GM10248 (cell line): ENCODE measurements at regions of chr3 and their contacts with region 1.

Region 1: GRCh38 chr3:130929804-130930203 is 35.9 kb downstream of the ATP2C1 start:
- DNase-seq: no peak
- CTCF ChIP-seq: no peak

Region 2: DNA sequence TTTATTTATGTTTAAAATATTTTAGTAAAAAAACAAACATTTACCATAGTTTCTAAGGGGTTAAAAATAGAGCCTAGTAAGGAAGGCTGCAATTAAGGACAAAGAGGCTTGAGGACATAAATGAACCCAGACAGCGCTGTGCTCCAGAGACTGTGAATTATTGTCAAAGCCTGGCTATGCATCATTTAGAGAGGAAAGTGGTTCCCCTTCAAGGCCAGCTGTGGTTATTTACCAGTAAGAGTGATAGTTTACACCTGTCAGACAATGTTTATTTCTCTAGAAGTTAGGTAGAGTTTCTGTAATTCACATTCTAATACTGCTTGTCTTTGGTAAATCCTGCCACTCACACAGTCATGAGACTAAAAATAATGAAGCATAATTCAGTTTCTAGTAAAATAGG is 150.8 kb before region 1 on chr3:
- CTCF ChIA-PET with region 1: no interaction called
- POLR2A ChIA-PET with region 1: no interaction called
- DNase-seq: peak; percentile 56
- CTCF ChIP-seq: no peak

Region 3: DNA sequence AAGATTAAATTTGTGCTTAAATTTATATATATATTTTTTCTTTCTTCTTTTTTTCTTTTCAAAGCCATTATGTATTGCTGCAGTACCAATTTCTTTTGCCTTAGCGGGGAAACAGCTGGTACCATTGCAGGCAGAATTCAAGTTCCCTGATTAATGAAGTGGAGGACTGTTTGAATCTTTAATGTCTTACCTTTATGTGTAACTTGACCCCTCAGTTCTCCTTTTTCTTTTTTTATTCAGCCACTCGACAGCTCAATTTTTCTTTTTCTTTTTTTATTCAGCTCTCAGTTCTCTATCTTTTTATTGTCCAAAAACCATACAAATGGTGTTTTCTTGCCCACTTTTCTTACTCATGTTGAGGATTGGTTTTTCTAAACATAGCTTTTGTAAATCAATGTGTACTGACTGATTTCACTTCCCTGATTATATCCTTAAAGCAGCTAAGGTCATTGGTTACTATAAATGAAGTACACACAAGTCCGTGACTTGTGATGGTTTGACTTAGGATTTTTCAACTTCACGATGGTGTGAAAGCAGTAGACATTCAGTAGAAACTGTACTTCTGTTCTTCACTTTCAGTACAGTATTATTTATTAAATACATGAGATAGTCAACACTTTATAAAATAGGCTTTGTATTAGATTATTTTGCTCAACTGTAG is 13.2 kb before region 1 on chr3:
- CTCF ChIA-PET with region 1: interaction called, 11 read pairs
- POLR2A ChIA-PET with region 1: interaction called, 3 read pairs
- DNase-seq: peak; percentile 28
- CTCF ChIP-seq: no peak

Region 4: DNA sequence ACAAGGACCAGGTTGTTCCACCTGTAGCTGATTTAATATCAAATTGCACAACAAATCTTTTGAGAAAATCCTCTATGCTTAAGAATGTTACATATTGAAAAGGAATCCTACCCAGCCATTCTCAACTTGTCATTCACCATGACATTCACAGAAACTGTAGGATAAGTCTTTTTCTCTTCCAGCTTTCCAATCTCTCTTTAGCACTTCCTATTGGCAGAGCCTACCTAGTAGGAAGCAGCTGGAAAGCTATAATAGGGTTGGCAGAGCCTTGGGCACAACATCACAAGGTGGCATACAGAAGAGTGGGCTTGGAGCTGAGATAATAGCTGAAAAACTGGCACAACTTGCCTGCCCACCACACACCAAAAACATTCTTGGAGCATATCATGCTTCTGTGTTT is 384.5 kb after region 1 on chr3:
- CTCF ChIA-PET with region 1: no interaction called
- POLR2A ChIA-PET with region 1: no interaction called
- DNase-seq: no peak
- CTCF ChIP-seq: no peak

Region 5: GRCh38 chr3:131361464-131362421 is 431.9 kb after region 1 on chr3:
- CTCF ChIA-PET with region 1: no interaction called
- POLR2A ChIA-PET with region 1: no interaction called
- DNase-seq: peak; percentile 92
- CTCF ChIP-seq: no peak